PC-3 (cell line): ENCODE measurements at regions of chr5 and their contacts with region 1.

Region 1: GRCh38 chr5:91486638-91487037 is 103.5 kb upstream of the ARRDC3 start:
- DNase-seq: peak; percentile 78
- ATAC-seq: peak; percentile 74
- H3K4me3 ChIP-seq: no peak overlapping the region
- H3K27ac ChIP-seq: peak overlapping the region; percentile 21; the same call in 1 of the 2 replicates
- H3K4me1 ChIP-seq: peaks cover 26% of the 10 kb centered on the region
- H3K27me3 ChIP-seq: no peaks in the 10 kb centered on the region
- CTCF ChIP-seq: no peak

Region 2: GRCh38 chr5:91472631-91473030 is 14.0 kb before region 1 on chr5:
- CTCF ChIA-PET with region 1: no interaction called
- POLR2A ChIA-PET with region 1: interaction called, 3 read pairs
- intact Hi-C with region 1: loop called (anchors 2 kb)
- DNase-seq: no peak
- ATAC-seq: peak; percentile 69
- H3K4me3 ChIP-seq: no peak overlapping the region
- H3K27ac ChIP-seq: no peak overlapping the region
- H3K4me1 ChIP-seq: peaks cover 30% of the 10 kb centered on the region
- H3K27me3 ChIP-seq: no peaks in the 10 kb centered on the region
- CTCF ChIP-seq: no peak

Region 3: DNA sequence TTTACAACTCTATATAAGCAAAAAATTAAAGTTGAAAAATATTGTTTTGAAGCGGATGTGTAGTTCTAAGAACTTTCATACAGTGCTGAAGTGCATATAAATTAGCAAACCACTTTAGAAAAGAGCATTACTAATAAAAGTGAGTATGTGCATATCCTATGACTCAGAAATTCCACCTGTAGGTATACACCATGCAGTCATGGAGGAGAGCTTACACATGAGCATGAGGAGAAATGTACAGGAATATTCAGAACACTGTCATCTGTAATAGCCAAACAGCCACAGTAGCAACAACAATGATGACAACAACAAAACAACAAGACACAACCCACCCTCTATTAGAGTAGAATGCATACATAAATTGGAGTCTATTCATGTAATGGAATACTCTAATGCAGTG is 34.7 kb after region 1 on chr5:
- CTCF ChIA-PET with region 1: no interaction called
- POLR2A ChIA-PET with region 1: no interaction called
- intact Hi-C with region 1: loop called (anchors 1 kb)
- DNase-seq: peak; percentile 83
- ATAC-seq: peak; percentile 99
- H3K4me3 ChIP-seq: no peak overlapping the region
- H3K27ac ChIP-seq: no peak overlapping the region
- H3K4me1 ChIP-seq: peaks cover 9% of the 10 kb centered on the region
- H3K27me3 ChIP-seq: no peaks in the 10 kb centered on the region
- CTCF ChIP-seq: no peak

Region 4: GRCh38 chr5:91598227-91598626 is 111.6 kb after region 1 on chr5:
- CTCF ChIA-PET with region 1: no interaction called
- POLR2A ChIA-PET with region 1: no interaction called
- intact Hi-C with region 1: no loop called
- DNase-seq: no peak
- ATAC-seq: no peak
- H3K4me3 ChIP-seq: no peak overlapping the region
- H3K27ac ChIP-seq: no peak overlapping the region
- H3K4me1 ChIP-seq: no peaks in the 10 kb centered on the region
- H3K27me3 ChIP-seq: 0 out of 2 replicates have a peak, but pooled peaks cover 6% of the 10 kb centered on the region
- CTCF ChIP-seq: no peak